Activated naive CD8-positive, alpha-beta T cell treated with anti-CD3 and anti-CD28 coated beads, Interleukin-2, amount 10 ng/mL, durations not matched to agents 7 days and 5 days (primary cell): ENCODE measurements at regions of chr7 and their contacts with region 1.

Region 1: GRCh38 chr7:73578342-73579127 is at the start of gene TBL2:
- DNase-seq: peak; percentile 99
- ATAC-seq: peak; percentile 95
- H3K4me3 Mint-ChIP-seq: peak within 1 kb of the TSS; percentile 91
- H3K27ac Mint-ChIP-seq: peak within 1 kb of the TSS; percentile 97
- H3K4me1 Mint-ChIP-seq: peaks cover 21% of the 10 kb centered on the region
- H3K27me3 Mint-ChIP-seq: no peaks in the 10 kb centered on the region
- total RNA-seq, gene TBL2: 21.3 to 25.0 TPM

Region 2: DNA sequence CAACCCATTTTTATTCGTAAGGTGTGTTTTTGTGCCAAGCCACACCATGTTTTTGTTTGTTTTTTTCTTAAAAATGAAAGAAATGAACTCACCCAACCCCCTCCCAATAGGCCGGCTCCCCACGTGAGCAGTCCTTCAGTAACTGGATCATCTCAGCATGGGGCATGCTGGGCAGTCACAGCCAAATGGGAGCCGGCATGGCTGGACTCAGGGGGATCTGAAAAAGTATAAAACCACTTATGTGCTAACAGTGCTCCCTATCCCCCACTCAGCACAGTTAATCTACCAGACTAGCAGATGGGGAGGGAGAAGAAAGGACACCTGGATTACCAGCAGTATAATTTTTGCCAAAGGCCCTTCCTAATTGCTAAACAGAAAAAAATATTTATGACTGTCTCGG is 95.8 kb before region 1 on chr7:
- POLR2A ChIA-PET with region 1: no interaction called
- DNase-seq: no peak
- ATAC-seq: no peak
- H3K4me3 Mint-ChIP-seq: no peak overlapping the region
- H3K27ac Mint-ChIP-seq: no peak overlapping the region
- H3K4me1 Mint-ChIP-seq: peaks cover 13% of the 10 kb centered on the region
- H3K27me3 Mint-ChIP-seq: no peaks in the 10 kb centered on the region

Region 3: DNA sequence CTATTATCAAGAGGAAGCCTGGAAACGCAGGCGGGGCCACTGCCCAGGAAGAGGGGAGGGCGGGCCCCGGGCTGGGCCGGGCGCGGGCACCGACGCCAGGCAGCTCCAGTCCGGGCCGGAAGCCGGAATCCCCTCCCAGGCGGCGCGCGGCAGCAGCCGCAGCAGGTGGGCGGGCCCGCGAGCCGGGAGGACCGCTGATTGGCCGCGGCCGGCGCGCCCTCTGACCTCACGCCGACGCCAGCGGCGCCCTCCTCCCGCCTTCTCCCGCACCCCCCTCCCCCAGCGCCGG is 21.5 kb before region 1 on chr7:
- POLR2A ChIA-PET with region 1: interaction called, 27 read pairs
- DNase-seq: peak; percentile 96
- ATAC-seq: peak; percentile 93
- H3K4me3 Mint-ChIP-seq: peak overlapping the region; percentile 94
- H3K27ac Mint-ChIP-seq: peak overlapping the region; percentile 98
- H3K4me1 Mint-ChIP-seq: peaks cover 30% of the 10 kb centered on the region
- H3K27me3 Mint-ChIP-seq: no peaks in the 10 kb centered on the region

Region 4: DNA sequence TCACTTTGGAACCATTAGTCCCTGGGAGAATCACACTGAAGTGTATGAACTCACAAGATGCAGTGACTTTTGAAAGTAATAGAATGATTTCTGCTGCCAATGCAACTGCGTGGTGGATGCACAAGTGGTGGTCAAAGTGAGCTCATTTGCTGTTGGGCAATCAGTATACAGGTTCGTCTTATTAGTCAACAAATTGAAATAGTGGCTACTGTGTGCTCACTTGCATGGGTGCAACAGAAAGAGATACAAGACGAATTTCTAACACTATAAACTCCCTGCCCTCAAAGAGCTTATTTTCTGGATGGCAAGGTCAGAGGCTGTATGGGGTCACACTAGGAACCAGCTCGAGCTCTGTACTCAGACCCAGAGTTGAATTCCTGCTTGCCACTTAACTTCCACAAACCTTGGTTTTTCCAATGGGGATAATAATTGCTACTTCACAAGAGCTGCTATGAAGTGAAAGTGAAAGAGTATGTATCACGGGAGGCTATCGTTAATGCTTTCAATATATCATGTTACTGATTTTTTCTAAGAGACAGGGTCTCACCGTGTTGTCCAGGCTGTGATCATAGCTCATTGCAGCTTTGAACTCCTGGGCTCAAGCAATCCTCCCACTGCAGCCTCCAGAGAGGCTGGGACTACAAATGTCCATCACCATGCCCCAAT is 12.7 kb before region 1 on chr7:
- POLR2A ChIA-PET with region 1: interaction called, 27 read pairs
- DNase-seq: no peak
- ATAC-seq: peak; percentile 46
- H3K4me3 Mint-ChIP-seq: peak overlapping the region; percentile 80
- H3K27ac Mint-ChIP-seq: peak overlapping the region; percentile 80
- H3K4me1 Mint-ChIP-seq: peaks cover 21% of the 10 kb centered on the region
- H3K27me3 Mint-ChIP-seq: no peaks in the 10 kb centered on the region

Region 5: DNA sequence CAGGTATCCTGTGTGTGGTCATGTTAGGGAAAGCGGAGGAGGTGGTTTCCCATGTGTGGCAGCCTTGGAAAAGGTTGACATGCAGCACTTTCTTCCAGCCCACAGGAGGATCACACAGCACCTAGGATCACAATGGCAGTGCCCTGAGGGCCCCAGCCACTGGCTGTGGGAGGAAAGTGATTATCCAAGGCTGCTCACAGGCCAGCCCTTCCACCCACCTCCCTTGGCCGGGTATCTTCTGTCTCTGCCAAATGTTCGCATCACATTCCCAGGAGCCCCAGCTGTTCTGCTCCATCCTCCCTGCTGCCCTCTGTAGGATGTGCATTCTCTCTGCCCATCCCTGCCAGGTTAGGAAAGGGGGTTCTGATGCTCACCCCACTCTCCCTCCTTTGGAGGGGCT is 48.3 kb after region 1 on chr7:
- POLR2A ChIA-PET with region 1: no interaction called
- DNase-seq: no peak
- ATAC-seq: no peak
- H3K4me3 Mint-ChIP-seq: no peak overlapping the region
- H3K27ac Mint-ChIP-seq: no peak overlapping the region
- H3K4me1 Mint-ChIP-seq: peaks cover 1% of the 10 kb centered on the region
- H3K27me3 Mint-ChIP-seq: peaks cover 73% of the 10 kb centered on the region

Region 6: DNA sequence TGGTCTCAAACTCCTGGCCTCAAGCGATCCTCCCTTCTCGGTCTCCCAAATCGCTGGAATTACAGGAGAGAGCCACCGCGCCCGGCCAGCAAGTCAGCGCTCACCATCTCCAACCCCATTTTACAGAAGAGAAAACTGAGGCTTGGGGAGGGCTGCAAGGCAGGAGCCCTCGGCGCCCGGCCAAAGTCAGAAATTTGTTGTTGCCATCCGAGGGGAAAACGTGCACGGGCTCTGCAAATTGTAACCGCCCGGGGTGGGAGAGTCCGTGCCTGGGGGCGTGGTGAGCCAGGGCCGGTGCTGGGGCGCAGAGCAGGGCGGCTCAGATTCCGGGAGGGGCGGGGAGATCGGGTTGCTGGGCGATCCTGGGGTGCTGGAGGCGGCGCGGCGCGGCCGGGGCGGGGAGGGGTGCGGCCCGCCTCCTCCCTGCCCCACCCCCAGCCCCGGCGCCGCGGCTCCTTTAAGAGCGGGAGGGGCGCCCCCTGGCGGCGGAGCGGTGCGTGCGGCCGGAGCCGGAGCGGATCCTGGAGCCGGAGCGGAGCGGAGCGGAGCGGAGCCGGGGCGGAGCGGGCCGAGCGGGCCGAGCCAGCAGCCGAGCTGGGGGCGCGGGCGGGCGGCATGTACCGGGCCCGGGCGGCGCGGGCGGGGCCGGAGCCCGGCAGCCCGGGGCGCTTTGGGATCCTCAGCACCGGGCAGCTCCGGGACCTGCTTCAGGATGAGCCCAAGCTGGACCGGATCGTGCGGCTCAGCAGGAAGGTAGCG is 89.0 kb after region 1 on chr7 and contains the start of gene VPS37D:
- POLR2A ChIA-PET with region 1: no interaction called
- DNase-seq: peak; percentile 99
- ATAC-seq: peak; percentile 94
- H3K4me3 Mint-ChIP-seq: peak within 1 kb of the TSS; percentile 78
- H3K27ac Mint-ChIP-seq: peak within 1 kb of the TSS; percentile 38
- H3K4me1 Mint-ChIP-seq: peaks cover 8% of the 10 kb centered on the region
- H3K27me3 Mint-ChIP-seq: peaks cover 52% of the 10 kb centered on the region
- total RNA-seq, gene VPS37D: 0.45 to 0.86 TPM

Region 7: GRCh38 chr7:73792594-73793292 is 214.2 kb after region 1 on chr7:
- POLR2A ChIA-PET with region 1: no interaction called
- DNase-seq: no peak
- ATAC-seq: no peak
- H3K4me3 Mint-ChIP-seq: no peak overlapping the region
- H3K27ac Mint-ChIP-seq: no peak overlapping the region
- H3K4me1 Mint-ChIP-seq: no peaks in the 10 kb centered on the region
- H3K27me3 Mint-ChIP-seq: peaks cover 4% of the 10 kb centered on the region